ENCODE measurements at regions of chr1 and their contacts with region 1.

Region 1: DNA sequence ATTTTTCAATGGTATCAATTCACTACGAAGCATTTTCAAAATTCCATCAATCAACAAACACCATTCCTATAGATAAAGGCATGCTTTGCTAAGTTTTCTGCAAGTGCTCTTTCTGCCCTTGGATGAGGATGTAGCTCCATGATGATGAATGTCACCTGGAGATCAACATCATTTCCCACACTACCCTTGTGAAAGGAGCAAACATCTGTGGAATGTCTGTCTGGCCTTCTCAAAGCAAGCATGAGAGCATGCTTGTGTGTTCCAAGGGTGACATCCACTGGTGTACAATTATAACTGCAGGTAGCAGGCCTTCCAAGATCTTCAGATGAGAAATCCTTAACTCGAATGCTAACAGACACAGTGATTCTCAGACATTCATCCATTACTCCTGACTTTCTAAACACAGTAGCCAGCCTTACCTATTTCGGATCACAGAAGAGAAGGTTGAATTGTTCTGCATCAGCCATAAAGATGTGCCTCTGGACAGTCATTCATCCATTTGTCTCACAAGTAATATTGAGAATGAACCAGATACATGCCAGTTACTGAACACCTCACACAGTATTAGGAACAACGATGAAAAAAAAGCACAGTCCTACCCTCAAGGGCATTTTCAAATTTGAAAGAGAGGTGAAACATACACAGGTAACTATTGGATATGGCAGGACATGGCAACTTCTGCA is 162.4 kb downstream of the TPR start:
- DNase-seq: peak; percentile 81
- H3K4me3 ChIP-seq: no peak overlapping the region
- H3K27ac ChIP-seq: no peak overlapping the region
- H3K4me1 ChIP-seq: peaks cover 11% of the 10 kb centered on the region
- CTCF ChIP-seq: peak; percentile 94

Region 2: GRCh38 chr1:184805667-184806295 is 1406.9 kb before region 1 on chr1:
- CTCF ChIA-PET with region 1: no interaction called
- POLR2A ChIA-PET with region 1: no interaction called
- intact Hi-C with region 1: loop called (anchors 10 kb)
- DNase-seq: peak; percentile 71
- H3K4me3 ChIP-seq: no peak overlapping the region
- H3K27ac ChIP-seq: no peak overlapping the region
- H3K4me1 ChIP-seq: no peaks in the 10 kb centered on the region
- CTCF ChIP-seq: peak; percentile 90

Region 3: GRCh38 chr1:185652348-185652747 is 560.3 kb before region 1 on chr1:
- CTCF ChIA-PET with region 1: no interaction called
- POLR2A ChIA-PET with region 1: no interaction called
- intact Hi-C with region 1: loop called (anchors 1 kb)
- DNase-seq: peak; percentile 10
- H3K4me3 ChIP-seq: no peak overlapping the region
- H3K27ac ChIP-seq: no peak overlapping the region
- H3K4me1 ChIP-seq: no peaks in the 10 kb centered on the region
- CTCF ChIP-seq: peak; percentile 63

Region 4: GRCh38 chr1:185719021-185719420 is 493.7 kb before region 1 on chr1:
- CTCF ChIA-PET with region 1: no interaction called
- POLR2A ChIA-PET with region 1: no interaction called
- intact Hi-C with region 1: loop called (anchors 1 kb)
- DNase-seq: no peak
- H3K4me3 ChIP-seq: no peak overlapping the region
- H3K27ac ChIP-seq: no peak overlapping the region
- H3K4me1 ChIP-seq: no peaks in the 10 kb centered on the region
- CTCF ChIP-seq: no peak

Region 5: GRCh38 chr1:185813401-185813979 is 399.2 kb before region 1 on chr1:
- CTCF ChIA-PET with region 1: no interaction called
- POLR2A ChIA-PET with region 1: interaction called, 3 read pairs
- intact Hi-C with region 1: loop called (anchors 1 kb)
- DNase-seq: peak; percentile 52
- H3K4me3 ChIP-seq: no peak overlapping the region
- H3K27ac ChIP-seq: no peak overlapping the region
- H3K4me1 ChIP-seq: no peaks in the 10 kb centered on the region
- CTCF ChIP-seq: peak; percentile 82

Region 6: DNA sequence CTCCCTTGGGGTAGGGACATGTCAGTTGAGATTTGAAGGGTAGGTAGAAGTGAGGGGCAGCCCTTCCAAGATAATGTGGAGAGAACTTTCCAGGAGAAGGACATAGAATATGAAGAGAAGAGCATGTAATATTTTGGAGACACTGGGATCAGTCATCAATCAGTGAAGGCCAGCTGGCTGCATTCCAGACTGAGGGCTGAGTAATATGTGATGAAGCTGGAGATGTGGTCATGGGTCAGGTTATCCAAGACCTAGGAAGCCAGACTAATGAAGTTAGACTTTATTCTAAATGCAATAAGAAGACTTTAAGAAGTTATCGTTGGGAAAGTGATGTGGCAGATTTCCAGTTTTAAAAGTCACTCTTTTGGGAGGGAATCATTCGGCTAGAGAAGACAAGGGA is 216.5 kb before region 1 on chr1:
- CTCF ChIA-PET with region 1: no interaction called
- POLR2A ChIA-PET with region 1: no interaction called
- intact Hi-C with region 1: loop called (anchors 10 kb)
- DNase-seq: no peak
- H3K4me3 ChIP-seq: no peak overlapping the region
- H3K27ac ChIP-seq: no peak overlapping the region
- H3K4me1 ChIP-seq: no peaks in the 10 kb centered on the region
- CTCF ChIP-seq: no peak

Region 7: DNA sequence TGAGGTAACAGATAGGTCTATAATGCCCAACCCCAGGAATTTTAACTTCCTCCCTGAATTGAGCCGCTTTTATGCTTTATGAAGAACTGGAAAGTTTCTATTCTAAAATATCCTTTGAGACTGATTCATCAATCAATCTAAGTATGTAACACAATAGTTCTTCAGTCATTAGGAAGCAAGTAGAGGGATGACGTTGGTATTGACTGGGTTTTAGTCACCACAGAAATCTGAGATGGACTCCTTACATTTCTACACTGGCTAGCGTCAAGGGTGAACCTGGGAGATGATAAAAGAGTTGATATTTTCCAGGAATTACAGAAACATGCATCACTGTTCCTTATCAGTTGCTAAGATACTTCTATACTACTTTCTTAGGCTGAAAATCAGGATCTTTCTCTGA is 170.5 kb before region 1 on chr1:
- CTCF ChIA-PET with region 1: no interaction called
- POLR2A ChIA-PET with region 1: no interaction called
- intact Hi-C with region 1: no loop called
- DNase-seq: no peak
- H3K4me3 ChIP-seq: no peak overlapping the region
- H3K27ac ChIP-seq: no peak overlapping the region
- H3K4me1 ChIP-seq: no peaks in the 10 kb centered on the region
- CTCF ChIP-seq: no peak

Region 8: DNA sequence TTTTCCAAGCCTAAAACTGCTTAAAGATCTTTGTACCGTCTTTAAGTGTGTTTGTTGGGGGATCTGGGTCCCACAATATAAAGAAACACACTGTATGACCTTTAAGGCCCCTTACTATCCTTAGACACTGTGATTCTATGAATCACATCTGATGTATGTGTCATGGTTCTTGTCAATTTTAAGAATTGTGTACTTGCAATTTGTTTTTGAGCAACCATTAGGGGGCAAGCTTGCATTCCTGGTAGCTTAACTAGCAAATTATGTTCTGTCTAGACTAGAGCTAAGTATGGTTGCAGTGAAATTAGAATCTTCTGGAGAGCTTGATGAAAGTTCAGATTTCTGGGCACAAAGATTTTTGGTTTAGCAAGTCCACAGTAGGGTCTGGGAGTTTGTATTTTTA is 57.1 kb before region 1 on chr1:
- CTCF ChIA-PET with region 1: no interaction called
- POLR2A ChIA-PET with region 1: interaction called, 7 read pairs
- intact Hi-C with region 1: loop called (anchors 1 kb)
- DNase-seq: peak; percentile 44
- H3K4me3 ChIP-seq: no peak overlapping the region
- H3K27ac ChIP-seq: no peak overlapping the region
- H3K4me1 ChIP-seq: no peaks in the 10 kb centered on the region
- CTCF ChIP-seq: peak; percentile 81

Measured in OCI-LY7 (cell line).